Tibial artery (tissue), 4 donors: ENCODE measurements at regions of chr10 and their contacts with region 1.

Region 1: GRCh38 chr10:114499630-114500190 is 95.4 kb upstream of the AFAP1L2 start:
- DNase-seq: no peak
- H3K4me3 ChIP-seq: no peak overlapping the region
- H3K27ac ChIP-seq: no peak overlapping the region
- H3K4me1 ChIP-seq: no peaks in the 10 kb centered on the region
- H3K27me3 ChIP-seq: no peaks in the 10 kb centered on the region
- CTCF ChIP-seq: no peak

Region 2: DNA sequence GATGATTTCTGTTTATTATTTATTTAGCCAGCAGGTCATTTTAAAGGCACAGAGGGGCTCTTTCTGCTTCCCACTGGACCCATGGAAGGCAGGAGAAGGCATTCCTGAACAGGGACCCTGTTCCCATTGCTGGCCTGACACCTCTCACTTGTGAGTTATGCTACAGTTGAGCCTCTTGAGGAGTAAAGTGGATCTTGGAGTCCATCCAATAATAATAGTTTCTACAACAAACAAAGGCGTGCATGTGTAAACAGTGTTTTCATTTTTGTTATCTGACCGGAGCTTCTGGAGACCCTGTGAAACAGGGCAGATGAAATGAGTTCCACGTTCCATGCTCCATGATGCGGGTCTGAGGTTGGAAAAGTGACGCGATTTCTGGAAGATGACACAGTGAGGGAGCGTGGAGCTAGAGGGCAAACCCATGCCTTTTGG is 1074.2 kb before region 1 on chr10:
- intact Hi-C with region 1: no loop called
- DNase-seq: no peak
- H3K4me3 ChIP-seq: no peak overlapping the region
- H3K27ac ChIP-seq: no peak overlapping the region
- H3K4me1 ChIP-seq: no peaks in the 10 kb centered on the region
- H3K27me3 ChIP-seq: no peaks in the 10 kb centered on the region
- CTCF ChIP-seq: no peak

Region 3: DNA sequence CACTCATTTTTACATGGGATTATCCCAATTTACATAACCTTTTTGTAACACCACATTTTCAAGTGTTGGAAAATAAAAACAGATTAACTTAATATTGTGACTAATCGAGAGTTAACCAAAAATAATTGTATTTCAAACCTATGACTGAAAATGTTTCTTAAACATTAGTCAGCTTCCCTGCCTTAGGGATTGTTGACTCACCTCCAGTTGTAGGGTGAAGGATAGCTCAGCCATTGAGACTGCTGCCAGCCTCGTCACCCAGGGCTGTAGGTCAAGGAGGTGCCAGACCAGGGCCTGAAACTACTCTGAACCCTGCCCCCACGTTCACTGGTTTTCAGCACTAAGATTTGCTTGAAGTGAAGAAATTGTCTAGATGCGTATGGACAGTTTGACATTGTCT is 1422.1 kb after region 1 on chr10:
- intact Hi-C with region 1: loop called (anchors 10 kb)
- DNase-seq: no peak
- H3K4me3 ChIP-seq: no peak overlapping the region
- H3K27ac ChIP-seq: no peak overlapping the region
- H3K4me1 ChIP-seq: no peaks in the 10 kb centered on the region
- H3K27me3 ChIP-seq: no peaks in the 10 kb centered on the region
- CTCF ChIP-seq: no peak